A549 (cell line): ENCODE measurements at regions of chr19 and their contacts with region 1.

Region 1: GRCh38 chr19:4390567-4391305 is 9.6 kb downstream of the SH3GL1 start:
- DNase-seq: no peak
- ATAC-seq: no peak
- H3K4me3 ChIP-seq: no peak overlapping the region
- H3K27ac ChIP-seq: no peak overlapping the region
- H3K4me1 ChIP-seq: no peaks in the 10 kb centered on the region
- CTCF ChIP-seq: no peak
- EP300 ChIP-seq: no peak
- POLR2A ChIP-seq: no peak
- RAD21 ChIP-seq: no peak

Region 2: GRCh38 chr19:4375164-4376027 is 15.3 kb before region 1 on chr19:
- CTCF ChIA-PET with region 1: interaction called, 19 read pairs
- POLR2A ChIA-PET with region 1: no interaction called
- DNase-seq: peak in 1 of 2 experiments; percentile 60
- ATAC-seq: peak; percentile 48 to 68
- H3K4me3 ChIP-seq: no peak overlapping the region
- H3K27ac ChIP-seq: peak overlapping the region; percentile 99
- H3K4me1 ChIP-seq: peaks cover 68% of the 10 kb centered on the region
- CTCF ChIP-seq: no peak
- EP300 ChIP-seq: no peak
- POLR2A ChIP-seq: no peak
- RAD21 ChIP-seq: no peak